BJ (cell line): ENCODE measurements at regions of chr16 and their contacts with region 1.

Region 1: DNA sequence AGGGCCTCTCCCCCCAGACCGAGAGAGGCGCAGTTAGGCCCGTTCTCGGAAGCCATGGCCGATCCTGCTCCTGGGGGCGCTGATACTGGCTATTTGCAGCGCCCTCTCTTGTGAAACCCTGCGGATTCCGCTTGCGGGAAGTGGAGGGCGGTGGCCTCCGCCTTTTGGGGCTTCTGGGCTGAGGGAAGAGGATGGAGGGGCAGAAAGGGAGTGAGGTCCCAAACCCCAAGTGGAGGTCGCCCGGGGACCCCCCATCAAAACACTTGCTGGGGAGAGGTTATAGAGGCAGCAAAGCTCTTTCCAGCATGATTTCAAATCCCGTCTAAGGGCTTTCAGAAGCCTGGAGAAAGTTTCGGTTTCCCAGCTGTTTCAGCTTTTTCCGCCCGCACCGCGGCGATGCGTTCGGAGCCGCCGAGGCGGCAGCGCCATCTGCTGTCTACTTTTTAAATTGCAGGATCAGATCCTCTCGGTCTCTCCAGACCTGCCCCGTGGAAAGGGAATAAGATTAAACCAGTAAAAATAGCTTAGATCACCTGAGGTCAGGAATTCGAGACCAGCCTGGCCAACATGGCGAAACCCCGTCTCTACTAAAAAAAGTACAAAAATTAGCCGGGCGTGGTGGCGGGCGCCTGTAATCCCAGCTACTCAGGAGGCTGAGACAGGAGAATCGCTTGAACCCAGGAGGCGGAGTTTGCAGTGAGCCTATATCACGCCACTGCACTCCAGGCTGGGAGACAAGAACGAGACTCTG is 15.8 kb downstream of the SNX20 start:
- DNase-seq: peak; percentile 4
- H3K4me3 ChIP-seq: peak overlapping the region; percentile 30
- H3K27me3 ChIP-seq: no peaks in the 10 kb centered on the region
- CTCF ChIP-seq: peak; percentile 84

Region 2: GRCh38 chr16:50368410-50369132 is 296.7 kb before region 1 on chr16 and contains the start of gene BRD7:
- CTCF ChIA-PET with region 1: interaction called, 76 read pairs
- POLR2A ChIA-PET with region 1: no interaction called
- DNase-seq: no peak
- H3K4me3 ChIP-seq: peak within 1 kb of the TSS; percentile 77
- H3K27me3 ChIP-seq: peaks cover 3% of the 10 kb centered on the region; the same call in 1 of the 2 replicates
- CTCF ChIP-seq: no peak
- polyA plus RNA-seq, gene BRD7: 30.3 and 51.7 TPM in 2 replicates

Region 3: DNA sequence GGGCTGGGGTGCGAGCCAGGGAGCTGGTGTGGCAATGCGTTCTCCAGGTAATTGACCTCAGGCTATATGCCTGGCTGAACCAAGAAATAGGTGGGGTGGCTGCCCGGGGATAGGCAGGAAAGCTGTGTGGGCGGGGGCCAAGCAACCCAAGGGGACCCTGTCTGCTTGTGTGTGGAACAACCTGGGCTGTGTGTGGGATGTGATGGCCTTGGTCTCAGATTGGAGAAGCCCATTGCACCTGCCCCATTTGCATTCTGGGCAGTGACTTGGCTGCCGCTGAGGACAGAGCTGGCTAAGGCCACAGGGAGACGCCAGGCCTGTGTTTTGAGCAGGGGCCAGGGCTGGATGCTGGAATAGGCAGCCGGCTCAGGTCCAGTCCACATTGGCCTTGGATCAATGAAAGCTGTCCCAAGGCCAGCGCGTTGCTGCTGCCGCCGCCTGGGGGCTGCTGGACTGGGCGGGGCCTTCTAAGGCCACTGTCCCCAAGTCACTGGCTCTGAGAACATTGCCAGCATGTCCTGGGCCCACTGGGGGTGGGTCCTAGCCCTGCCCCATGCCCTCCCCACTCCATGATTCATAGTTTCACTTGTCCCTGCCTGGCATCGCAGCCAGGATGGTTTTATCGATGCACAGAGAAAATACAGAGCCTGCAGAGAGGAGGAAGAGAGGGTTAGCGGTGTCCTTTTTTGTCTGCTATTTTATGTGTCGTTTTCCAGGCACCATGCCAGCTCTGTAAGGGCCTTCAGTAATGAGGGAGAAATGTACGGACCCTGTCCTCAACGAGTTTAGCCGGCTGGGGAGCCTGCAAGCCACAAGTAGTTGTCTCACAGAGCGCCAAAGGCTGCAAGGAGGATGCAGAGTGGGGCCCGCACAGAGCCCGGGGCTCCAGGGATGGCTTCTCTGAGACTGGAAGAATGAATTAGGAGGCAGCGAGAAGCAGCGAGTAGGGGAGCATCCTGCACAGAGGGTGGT is 73.2 kb before region 1 on chr16:
- CTCF ChIA-PET with region 1: interaction called, 22 read pairs
- POLR2A ChIA-PET with region 1: no interaction called
- DNase-seq: no peak
- H3K4me3 ChIP-seq: no peak overlapping the region
- H3K27me3 ChIP-seq: no peaks in the 10 kb centered on the region
- CTCF ChIP-seq: no peak

Region 4: DNA sequence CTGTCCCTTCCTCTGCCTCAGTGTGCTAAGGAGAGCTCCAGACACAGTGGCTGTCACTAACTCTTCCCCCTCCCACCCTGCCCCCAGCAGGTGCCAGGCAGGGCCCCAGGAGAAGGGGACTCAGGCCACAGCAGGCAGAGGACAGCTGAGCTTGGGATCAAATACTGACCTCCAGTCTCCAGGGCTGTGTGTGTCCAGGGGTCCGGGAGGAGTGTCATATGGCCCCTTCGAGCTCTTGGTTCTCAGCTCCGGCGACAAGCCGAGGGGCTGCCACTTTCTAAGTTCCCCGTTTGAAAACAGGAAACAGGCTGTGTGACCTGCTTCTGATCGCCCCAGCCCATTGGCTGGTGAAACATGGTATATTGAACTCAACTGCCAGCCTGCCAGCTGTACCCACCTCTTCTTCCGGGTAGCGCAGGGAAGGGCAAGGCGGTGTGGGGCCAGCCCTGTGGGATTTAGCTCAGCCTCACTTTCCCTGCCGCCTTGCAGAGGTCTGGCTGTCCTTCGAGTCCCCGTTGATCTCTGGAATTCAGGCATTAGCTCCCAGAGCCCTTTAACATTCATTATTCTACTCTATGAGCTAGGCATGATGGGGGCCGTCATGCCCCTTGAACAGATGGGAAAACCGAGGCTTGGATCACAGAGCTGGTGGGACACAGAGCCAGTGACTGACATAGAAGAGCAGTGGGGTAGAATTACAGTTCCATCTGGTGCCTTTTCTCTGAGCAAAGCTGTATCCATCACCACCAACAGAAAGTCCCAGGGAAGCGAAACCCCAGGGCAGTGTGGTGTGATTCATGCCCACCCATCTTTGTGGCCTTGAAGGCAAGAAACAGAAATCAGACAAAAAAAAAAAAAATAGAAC is 15.9 kb after region 1 on chr16 and contains the start of gene SNX20:
- CTCF ChIA-PET with region 1: interaction called, 105 read pairs
- POLR2A ChIA-PET with region 1: no interaction called
- DNase-seq: no peak
- H3K4me3 ChIP-seq: no peak within 1 kb of the TSS
- H3K27me3 ChIP-seq: no peaks in the 10 kb centered on the region
- CTCF ChIP-seq: no peak
- polyA plus RNA-seq, gene SNX20: not detected in 2 replicates

Region 5: GRCh38 chr16:50884066-50884860 is 219.0 kb after region 1 on chr16:
- CTCF ChIA-PET with region 1: no interaction called
- POLR2A ChIA-PET with region 1: no interaction called
- DNase-seq: no peak
- H3K4me3 ChIP-seq: no peak overlapping the region
- H3K27me3 ChIP-seq: no peaks in the 10 kb centered on the region
- CTCF ChIP-seq: 0 out of 2 replicates have a peak, but pooled peaks have one; percentile 7